ENCODE measurements at regions of chr6 and their contacts with region 1.

Region 1: DNA sequence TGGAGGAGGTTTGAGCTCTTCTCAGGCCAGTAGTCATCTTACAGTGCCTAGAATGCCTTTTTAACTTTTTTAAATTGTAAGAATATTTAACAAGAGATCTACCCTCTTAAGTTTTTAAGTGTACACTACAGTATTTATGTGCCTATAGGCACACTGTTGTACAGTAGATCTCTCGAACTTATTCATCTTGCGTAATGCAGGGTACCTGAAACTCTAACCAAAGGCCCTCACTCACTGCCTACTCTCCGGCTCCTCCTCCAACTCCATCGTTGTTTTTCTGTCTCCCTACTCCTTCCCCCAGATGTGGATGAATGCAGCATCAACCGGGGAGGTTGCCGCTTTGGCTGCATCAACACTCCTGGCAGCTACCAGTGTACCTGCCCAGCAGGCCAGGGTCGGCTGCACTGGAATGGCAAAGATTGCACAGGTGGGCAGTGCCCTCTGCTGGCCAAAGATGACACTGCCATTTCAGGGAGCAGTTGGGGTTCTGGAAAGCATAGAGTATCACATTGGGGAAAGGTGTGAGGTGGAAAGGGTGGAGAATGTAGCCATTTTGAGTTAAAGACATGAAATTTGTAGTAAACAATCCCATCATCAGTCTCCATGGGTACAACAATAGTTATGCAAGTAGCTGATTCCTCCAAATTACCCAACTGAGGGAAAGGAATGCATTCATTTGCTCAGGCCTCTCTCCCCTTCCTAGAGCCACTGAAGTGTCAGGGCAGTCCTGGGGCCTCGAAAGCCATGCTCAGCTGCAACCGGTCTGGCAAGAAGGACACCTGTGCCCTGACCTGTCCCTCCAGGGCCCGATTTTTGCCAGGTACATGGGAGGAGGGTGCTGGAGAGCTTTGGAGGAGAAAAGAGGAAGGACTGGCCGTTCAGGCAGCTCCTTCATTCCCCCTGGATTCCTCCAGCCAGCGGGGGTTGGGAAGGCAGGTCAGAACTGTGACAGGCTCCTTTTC is 18.4 kb upstream of the ZNF76 start:
- DNase-seq: no peak
- H3K4me3 ChIP-seq: no peak overlapping the region
- H3K27me3 ChIP-seq: no peaks in the 10 kb centered on the region
- CTCF ChIP-seq: peak; percentile 96

Region 2: DNA sequence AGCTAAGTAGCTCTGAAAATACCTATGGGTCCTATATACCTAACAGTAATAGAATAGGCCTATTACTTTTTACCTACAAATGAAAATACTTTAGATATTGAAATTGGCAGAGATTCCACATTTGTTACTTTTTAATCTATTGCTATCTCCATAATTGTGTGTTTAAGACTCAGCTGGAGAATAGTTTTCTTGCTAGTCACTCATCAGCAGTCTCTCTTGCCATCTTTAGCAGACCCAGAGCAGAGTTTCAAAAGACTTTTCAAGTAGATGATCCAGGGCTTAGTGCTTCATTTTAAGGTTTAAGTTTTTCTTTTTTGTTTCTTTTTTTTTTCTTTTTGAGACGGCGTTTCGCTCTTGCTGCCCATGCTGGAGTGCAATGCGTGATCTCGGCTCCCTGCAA is 339.2 kb before region 1 on chr6:
- CTCF ChIA-PET with region 1: no interaction called
- POLR2A ChIA-PET with region 1: no interaction called
- DNase-seq: no peak
- H3K4me3 ChIP-seq: no peak overlapping the region
- H3K27me3 ChIP-seq: no peaks in the 10 kb centered on the region
- CTCF ChIP-seq: no peak

Region 3: DNA sequence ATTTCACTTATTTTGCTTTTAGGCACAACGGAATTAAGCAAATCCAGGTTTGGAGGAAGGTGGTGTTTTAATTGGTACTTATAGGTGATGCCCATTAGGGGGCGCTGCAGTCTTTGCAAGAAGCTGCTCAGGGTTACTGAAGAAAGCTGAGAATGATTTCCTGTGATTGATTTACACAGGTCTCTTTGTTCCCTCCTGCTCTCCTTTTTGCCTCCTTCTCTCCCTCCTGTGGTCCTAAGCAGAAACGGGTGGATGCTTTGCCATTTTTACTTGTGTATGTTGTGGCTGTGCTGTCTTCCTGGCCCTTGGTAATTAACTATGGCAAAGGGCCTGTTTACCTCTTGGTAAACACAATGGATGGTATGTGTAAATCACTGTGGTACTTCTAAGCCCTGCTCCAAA is 254.3 kb before region 1 on chr6:
- CTCF ChIA-PET with region 1: interaction called, 14 read pairs
- POLR2A ChIA-PET with region 1: no interaction called
- DNase-seq: no peak
- H3K4me3 ChIP-seq: no peak overlapping the region
- H3K27me3 ChIP-seq: no peaks in the 10 kb centered on the region
- CTCF ChIP-seq: peak; percentile 71

Region 4: GRCh38 chr6:35146453-35146852 is 94.7 kb before region 1 on chr6:
- CTCF ChIA-PET with region 1: interaction called, 119 read pairs
- POLR2A ChIA-PET with region 1: no interaction called
- DNase-seq: no peak
- H3K4me3 ChIP-seq: no peak overlapping the region
- H3K27me3 ChIP-seq: no peaks in the 10 kb centered on the region
- CTCF ChIP-seq: peak; percentile 74

Region 5: GRCh38 chr6:35213824-35214756 is 27.0 kb before region 1 on chr6 and contains the start of gene SCUBE3:
- CTCF ChIA-PET with region 1: interaction called, 65 read pairs
- POLR2A ChIA-PET with region 1: no interaction called
- DNase-seq: no peak
- H3K4me3 ChIP-seq: peak within 1 kb of the TSS; percentile 50
- H3K27me3 ChIP-seq: peaks cover 6% of the 10 kb centered on the region
- CTCF ChIP-seq: no peak
- polyA plus RNA-seq, gene SCUBE3: 12.3 and 13.1 TPM in 2 replicates

Region 6: DNA sequence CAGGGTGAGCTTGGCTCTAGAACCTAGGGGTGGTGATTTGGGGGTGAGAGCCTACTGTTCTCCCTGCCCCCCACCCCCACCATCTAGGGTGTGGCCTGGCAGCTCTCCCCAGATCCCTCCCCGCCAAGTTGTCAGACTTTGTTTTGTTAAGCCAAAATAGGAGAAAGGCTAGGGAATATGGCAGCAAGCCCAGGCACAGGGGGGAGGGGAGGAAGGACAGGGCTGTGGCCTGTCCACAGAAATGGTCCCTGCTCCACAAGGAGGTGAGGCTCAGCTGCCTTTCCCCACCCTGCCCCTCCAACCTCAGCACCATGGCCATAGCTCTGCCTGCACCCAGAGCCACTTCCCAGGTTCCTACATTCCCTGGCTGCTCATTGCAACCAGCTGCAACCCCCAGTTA is 10.2 kb before region 1 on chr6:
- CTCF ChIA-PET with region 1: interaction called, 83 read pairs
- POLR2A ChIA-PET with region 1: no interaction called
- DNase-seq: no peak
- H3K4me3 ChIP-seq: no peak overlapping the region
- H3K27me3 ChIP-seq: no peaks in the 10 kb centered on the region
- CTCF ChIP-seq: no peak